ENCODE measurements at regions of chr16 and their contacts with region 1.

Region 1: DNA sequence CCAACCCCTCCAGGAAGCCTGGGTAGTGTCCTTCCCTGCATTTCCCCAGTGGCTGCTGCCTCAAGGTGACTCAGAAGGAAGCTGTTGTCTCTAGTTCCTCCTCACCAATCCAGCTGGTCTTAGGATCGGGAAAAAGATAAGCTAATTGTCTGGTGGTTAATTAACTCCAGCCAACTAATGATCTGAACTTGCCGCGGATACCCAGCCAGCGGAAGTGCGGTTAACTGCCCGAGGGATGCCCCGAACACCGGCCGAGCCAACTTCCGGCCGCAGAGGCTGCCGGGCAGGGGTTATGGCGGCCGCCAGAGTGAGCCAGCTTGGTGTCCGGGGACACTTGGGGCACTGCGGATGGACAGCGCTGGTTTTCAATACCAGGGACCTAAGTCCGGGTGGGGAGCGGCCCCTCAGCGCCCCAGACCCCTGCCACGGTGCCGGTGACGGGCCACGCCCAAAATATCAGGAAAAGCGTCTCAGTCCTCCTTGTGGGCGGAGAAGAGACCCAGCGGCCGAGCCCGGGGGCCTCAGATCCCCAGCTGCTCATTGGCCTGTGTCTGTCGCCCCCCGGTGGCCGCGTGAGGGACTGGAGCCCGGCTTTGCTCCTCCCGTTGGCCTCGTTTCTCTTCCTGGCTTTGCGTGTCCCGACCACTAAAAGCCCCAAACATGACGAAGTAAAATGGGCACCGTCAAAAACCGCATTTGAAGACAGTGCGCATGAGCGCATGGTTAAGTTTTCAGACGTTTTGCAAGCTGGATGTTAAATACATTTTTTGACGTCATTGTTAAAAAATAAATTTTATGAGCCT is 10.2 kb upstream of the PRSS22 start:
- DNase-seq: peak; percentile 96
- ATAC-seq: peak; percentile 95
- H3K4me3 Mint-ChIP-seq: peak overlapping the region; percentile 87
- H3K27ac Mint-ChIP-seq: peak overlapping the region; percentile 87
- H3K4me1 Mint-ChIP-seq: peaks cover 19% of the 10 kb centered on the region
- H3K27me3 Mint-ChIP-seq: peaks cover 2% of the 10 kb centered on the region

Region 2: GRCh38 chr16:2838928-2839327 is 29.3 kb before region 1 on chr16:
- POLR2A ChIA-PET with region 1: interaction called, 19 read pairs
- DNase-seq: peak; percentile 73
- ATAC-seq: peak; percentile 76
- H3K4me3 Mint-ChIP-seq: no peak overlapping the region
- H3K27ac Mint-ChIP-seq: peak overlapping the region; percentile 15
- H3K4me1 Mint-ChIP-seq: peaks cover 20% of the 10 kb centered on the region
- H3K27me3 Mint-ChIP-seq: peaks cover 5% of the 10 kb centered on the region

Region 3: GRCh38 chr16:2911580-2912329 is 43.6 kb after region 1 on chr16 and contains the start of gene FLYWCH1:
- POLR2A ChIA-PET with region 1: interaction called, 13 read pairs
- DNase-seq: peak; percentile 97
- ATAC-seq: peak; percentile 98
- H3K4me3 Mint-ChIP-seq: peak within 1 kb of the TSS; percentile 93
- H3K27ac Mint-ChIP-seq: peak within 1 kb of the TSS; percentile 85
- H3K4me1 Mint-ChIP-seq: peaks cover 14% of the 10 kb centered on the region
- H3K27me3 Mint-ChIP-seq: peaks cover 5% of the 10 kb centered on the region
- total RNA-seq, gene FLYWCH1: 65.5 to 69.7 TPM